Panc1 (cell line): ENCODE measurements at regions of chrX and their contacts with region 1.

Region 1: DNA sequence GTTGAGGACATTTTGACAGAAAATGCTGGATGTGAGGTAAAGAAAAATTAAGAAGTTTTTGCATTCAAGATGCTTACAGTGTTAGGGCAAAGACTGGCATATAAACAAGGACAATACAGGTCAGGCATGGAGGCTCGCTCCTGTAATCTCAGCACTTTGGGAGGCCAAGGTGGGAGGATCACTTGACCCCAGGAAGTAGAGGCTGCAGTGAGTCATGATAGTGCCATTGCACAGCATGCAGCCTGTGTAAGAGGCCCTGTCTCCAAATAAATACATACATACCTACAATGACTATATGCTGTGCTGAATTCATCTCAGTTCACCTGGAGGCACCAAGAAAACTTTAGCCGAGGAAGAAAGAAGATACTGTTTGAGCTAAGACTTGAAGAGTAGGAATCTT is 2.3 kb downstream of the MAGT1 start:
- DNase-seq: no peak
- ATAC-seq: no peak
- H3K4me3 ChIP-seq: no peak overlapping the region
- H3K27ac ChIP-seq: no peak overlapping the region
- H3K4me1 ChIP-seq: no peaks in the 10 kb centered on the region; the same call in 1 of the 2 replicates
- H3K27me3 ChIP-seq: no peaks in the 10 kb centered on the region
- CTCF ChIP-seq: no peak

Region 2: DNA sequence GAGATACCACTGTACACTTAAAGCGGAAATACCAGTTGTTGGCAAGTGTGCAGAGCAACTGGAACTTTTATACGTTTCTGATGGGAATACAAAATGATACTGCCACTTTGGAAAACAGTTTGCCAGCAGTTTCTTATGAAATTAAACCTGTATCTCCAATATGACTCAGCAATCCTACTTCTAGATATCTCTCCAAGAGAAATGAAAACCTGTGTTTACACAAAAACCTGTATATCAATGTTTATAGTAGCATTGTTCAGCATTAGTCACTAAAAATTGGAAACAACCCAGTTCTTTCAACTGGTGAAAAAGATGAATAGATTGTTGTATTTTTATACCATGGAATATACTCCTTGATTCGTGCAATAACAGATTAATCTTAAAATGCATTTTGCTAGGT is 44.4 kb after region 1 on chrX:
- CTCF ChIA-PET with region 1: interaction called, 12 read pairs
- POLR2A ChIA-PET with region 1: no interaction called
- in situ Hi-C with region 1: no loop called
- intact Hi-C with region 1: no loop called
- DNase-seq: no peak
- ATAC-seq: peak; percentile 86
- H3K4me3 ChIP-seq: no peak overlapping the region
- H3K27ac ChIP-seq: peak overlapping the region; percentile 40
- H3K4me1 ChIP-seq: peaks cover 12% of the 10 kb centered on the region; the same call in 1 of the 2 replicates
- H3K27me3 ChIP-seq: no peaks in the 10 kb centered on the region
- CTCF ChIP-seq: no peak